ENCODE measurements at regions of chr12 and their contacts with region 1.

Region 1: DNA sequence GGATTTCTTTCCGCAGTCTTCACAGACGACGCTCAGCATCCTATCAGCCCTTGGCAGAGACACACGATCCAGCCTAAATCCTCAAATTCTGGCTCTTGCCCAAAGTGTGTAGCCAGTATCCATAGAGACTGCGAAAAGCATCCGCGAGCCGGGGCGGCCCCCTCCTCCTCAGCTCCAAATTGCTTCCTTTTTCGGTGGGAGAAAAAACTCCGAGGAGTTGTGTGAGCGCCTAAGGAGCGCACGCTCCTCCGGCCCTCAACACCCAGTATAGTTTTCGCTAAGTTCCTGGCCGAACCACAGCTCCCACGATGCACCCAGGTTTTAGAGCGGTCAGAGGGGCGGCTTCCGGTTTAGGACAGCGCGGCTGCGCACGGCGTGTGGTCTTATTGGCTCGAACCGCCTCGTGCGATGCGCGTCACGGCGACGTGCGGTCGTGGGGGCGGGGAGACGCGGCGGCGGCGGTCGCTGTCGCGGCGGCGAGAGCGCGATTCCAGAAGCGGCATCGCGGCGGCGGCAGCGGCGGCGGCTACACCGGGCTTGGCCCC is at the start of gene ADIPOR2:
- DNase-seq: peak; percentile 97
- H3K4me3 ChIP-seq: peak within 1 kb of the TSS; percentile 73 to 99 (median 89)
- H3K27ac ChIP-seq: peak within 1 kb of the TSS; percentile 85 to 96
- H3K4me1 ChIP-seq: peaks cover 13 to 34% (median 24%) of the 10 kb centered on the region in 4 experiments
- H3K27me3 ChIP-seq: no peaks in the 10 kb centered on the region

Region 2: DNA sequence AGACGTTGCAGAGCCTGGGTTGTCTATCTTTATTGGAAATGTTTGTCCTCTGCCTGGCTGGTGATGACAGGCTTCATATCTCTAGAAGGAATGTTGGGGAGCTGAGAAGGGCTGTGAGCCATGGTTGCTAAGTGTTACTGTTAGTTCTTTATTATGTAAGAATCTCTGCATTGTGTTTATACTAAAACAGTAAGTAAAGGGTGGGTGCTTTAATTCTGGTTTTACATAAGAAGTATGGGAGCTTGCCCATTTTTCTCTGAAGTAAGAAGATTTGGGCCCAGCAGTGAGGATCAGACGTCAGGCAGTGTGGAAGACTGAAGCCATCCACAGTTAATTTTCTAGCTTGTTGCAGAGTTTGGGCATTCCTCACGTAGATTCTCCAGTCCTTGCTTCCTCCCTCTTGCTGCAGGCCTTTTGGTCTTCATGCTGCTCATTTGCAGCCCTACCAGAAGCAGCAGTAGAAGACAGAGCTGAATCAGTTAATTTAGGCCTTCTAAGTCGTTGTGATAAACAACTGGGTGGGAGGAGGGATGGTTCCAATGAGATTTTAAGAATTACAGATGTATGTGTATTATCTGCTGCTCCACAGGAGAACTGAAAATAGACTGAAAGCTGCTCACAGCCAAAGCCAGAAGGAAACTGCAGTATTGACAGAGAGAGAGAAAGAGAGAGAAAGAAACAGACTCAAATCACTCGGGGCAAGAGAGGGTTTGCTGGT is 40.2 kb before region 1 on chr12:
- CTCF ChIA-PET with region 1: interaction called, 10 read pairs
- POLR2A ChIA-PET with region 1: interaction called, 3 read pairs
- DNase-seq: no peak
- H3K4me3 ChIP-seq: no peak overlapping the region
- H3K27ac ChIP-seq: no peak overlapping the region
- H3K4me1 ChIP-seq: peaks cover 2 to 10% (median 6%) of the 10 kb centered on the region in 4 experiments
- H3K27me3 ChIP-seq: no peaks in the 10 kb centered on the region

Region 3: DNA sequence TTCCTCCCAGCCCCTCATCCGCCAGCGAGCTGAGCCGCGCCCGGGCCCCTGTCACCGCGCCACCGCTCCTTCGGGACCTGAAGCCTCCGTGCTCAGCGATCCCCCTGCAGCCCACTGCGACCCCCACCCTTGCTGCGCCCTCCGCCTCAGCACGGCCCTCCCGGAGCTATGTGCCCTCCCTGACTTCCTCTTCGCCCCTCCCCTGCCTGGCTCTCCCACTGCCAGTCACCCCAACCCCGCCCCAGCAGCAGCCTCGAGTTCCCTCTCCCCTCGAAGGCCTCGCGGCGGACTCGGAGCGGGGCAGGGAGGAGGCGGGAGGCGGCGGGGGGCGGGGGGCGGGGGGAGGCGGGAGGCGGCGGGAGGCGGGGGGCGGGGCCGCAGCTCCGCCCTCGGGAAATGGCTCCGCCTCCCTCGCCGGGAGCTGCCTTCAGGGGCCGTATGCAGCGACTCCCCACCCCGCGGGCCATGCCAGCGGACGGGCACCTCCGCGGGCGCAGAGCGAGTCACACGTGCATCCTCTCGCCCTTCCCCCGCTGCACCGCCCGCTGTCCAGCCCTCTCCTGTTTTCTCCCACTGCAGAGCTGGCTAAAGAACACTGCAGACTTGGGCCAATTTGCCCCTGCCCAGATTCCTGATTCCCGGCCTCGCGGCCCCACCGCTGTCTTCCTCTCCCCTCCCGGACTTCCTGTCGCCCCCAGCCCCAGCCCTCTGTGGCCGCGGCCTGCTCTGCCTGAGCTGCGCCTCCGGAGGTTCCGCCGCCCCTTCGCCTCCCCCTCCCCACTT is 28.9 kb before region 1 on chr12:
- CTCF ChIA-PET with region 1: interaction called, 3 read pairs
- POLR2A ChIA-PET with region 1: interaction called, 10 read pairs
- DNase-seq: peak; percentile 96 to 98 (median 97)
- H3K4me3 ChIP-seq: peak overlapping the region in 6 of 7 experiments; percentile 23 to 67 (median 42)
- H3K27ac ChIP-seq: no peak overlapping the region
- H3K4me1 ChIP-seq: peaks cover 5 to 26% (median 19%) of the 10 kb centered on the region in 4 experiments
- H3K27me3 ChIP-seq: no peaks in the 10 kb centered on the region

Region 4: GRCh38 chr12:1668833-1669543 is 21.7 kb before region 1 on chr12:
- CTCF ChIA-PET with region 1: interaction called, 19 read pairs
- POLR2A ChIA-PET with region 1: interaction called, 6 read pairs
- DNase-seq: peak; percentile 64 to 81 (median 78)
- H3K4me3 ChIP-seq: peak overlapping the region in 2 of 7 experiments; percentile 32 to 42
- H3K27ac ChIP-seq: peak overlapping the region in 1 of 2 experiments; percentile 54
- H3K4me1 ChIP-seq: peaks cover 24 to 51% (median 47%) of the 10 kb centered on the region in 4 experiments
- H3K27me3 ChIP-seq: no peaks in the 10 kb centered on the region

Region 5: DNA sequence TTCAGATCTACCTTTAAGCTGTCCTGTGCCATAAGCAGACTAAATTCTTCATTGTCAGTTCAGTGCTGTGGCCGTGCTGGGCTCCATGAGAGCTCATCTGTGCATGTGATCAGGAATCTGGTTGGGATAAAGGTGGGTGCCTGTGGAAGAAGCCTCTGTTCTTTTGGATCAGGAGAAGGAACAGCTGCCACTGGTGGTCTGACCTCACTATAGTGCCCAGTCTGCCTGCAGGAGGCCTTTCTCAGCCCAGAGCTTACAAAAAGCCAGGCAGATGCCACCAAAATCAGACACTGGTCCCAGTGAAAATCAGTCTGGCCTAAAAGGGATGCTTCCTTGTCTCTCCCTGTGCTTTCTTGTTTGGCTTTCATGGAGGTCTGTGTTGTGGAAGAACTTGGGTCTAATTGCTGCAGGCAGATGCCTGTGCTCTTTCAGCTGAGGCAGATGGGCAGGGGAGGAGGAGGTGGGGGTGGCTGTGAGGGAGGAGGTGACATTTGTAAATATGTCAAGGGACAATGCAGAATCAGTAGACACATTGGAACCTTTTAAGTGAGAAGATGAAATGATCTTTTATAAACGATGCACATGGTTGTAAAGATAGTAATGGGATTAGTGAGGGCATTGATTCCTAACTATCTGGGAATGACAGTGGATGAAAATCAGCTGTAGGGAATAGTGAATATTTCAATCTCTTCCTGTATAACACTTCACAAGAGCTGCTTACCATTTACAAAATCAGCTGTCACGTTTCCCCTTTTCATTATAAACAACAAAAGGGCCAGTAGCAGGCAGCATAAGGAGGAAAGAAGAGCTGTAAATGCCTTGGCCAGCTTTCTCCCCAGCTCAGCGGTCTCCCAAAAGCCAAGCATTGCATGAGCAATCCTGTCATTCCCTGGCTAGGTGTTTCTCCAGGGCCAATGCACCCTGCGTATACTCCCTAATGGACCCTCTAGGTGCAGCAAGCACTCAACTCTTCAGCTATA is 183.2 kb after region 1 on chr12:
- CTCF ChIA-PET with region 1: no interaction called
- POLR2A ChIA-PET with region 1: no interaction called
- DNase-seq: no peak
- H3K4me3 ChIP-seq: no peak overlapping the region
- H3K27ac ChIP-seq: no peak overlapping the region
- H3K4me1 ChIP-seq: no peaks in the 10 kb centered on the region
- H3K27me3 ChIP-seq: no peaks in the 10 kb centered on the region

Measured in common myeloid progenitor, CD34-positive (primary cell).